ENCODE measurements at regions of chr22 and their contacts with region 1.

Region 1: DNA sequence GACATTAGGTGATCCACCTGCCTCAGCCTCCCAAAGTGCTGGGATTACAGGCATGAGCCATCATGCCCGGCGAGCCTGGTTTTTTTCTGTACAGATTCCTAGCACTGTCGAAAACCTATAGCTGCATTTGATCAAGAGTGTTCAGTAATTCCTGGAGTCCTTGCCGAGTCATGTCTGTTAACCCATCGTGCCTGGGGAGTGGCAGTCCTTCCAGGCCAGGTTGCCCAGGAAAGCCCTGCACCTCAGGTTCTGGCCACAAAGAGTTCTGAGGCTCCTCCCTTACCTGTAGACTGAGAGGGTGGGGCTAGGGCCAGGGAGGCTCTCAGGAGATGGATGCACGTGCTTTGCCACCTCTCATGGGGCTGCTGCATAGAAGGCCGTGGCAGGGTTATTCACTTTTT is 17.0 kb downstream of the YDJC start:
- DNase-seq: no peak
- ATAC-seq: no peak
- H3K4me3 Mint-ChIP-seq: no peak overlapping the region
- H3K27ac Mint-ChIP-seq: peak overlapping the region; percentile 35
- H3K4me1 Mint-ChIP-seq: peaks cover 42% of the 10 kb centered on the region
- H3K27me3 Mint-ChIP-seq: no peaks in the 10 kb centered on the region
- CTCF ChIP-seq: no peak

Region 2: DNA sequence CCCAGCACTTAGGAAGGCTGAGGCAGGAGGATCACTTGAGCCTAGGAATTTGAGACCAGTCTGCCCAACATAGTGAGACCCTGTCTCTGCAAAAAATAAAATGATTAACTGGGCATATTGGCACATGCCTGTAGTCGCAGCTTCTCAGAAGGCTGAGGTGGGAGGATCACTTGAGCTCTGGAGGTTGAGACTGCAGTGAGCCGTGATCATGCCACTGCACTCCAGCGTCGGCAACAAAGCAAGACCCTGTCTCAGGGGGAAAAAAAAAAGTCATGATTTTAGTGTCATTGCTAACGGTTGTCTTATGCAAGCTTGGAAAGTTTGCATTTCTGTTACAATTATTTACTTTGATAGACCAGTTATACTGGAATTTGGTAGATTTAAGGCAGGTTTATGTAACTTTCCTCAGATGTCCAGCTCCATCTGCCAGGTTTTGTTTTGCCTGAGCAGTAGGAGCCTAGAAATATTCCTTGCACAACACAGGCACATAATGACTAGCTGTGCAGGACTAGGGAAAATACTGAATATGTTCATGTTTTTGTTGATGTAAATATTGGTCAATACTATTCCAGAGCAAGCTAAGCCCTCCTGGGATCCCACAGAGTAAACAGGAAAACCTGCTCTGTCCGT is 33.2 kb before region 1 on chr22:
- CTCF ChIA-PET with region 1: no interaction called
- POLR2A ChIA-PET with region 1: interaction called, 18 read pairs
- intact Hi-C with region 1: no loop called
- DNase-seq: no peak
- ATAC-seq: no peak
- H3K4me3 Mint-ChIP-seq: no peak overlapping the region
- H3K27ac Mint-ChIP-seq: no peak overlapping the region
- H3K4me1 Mint-ChIP-seq: peaks cover 50% of the 10 kb centered on the region
- H3K27me3 Mint-ChIP-seq: no peaks in the 10 kb centered on the region
- CTCF ChIP-seq: no peak

Region 3: DNA sequence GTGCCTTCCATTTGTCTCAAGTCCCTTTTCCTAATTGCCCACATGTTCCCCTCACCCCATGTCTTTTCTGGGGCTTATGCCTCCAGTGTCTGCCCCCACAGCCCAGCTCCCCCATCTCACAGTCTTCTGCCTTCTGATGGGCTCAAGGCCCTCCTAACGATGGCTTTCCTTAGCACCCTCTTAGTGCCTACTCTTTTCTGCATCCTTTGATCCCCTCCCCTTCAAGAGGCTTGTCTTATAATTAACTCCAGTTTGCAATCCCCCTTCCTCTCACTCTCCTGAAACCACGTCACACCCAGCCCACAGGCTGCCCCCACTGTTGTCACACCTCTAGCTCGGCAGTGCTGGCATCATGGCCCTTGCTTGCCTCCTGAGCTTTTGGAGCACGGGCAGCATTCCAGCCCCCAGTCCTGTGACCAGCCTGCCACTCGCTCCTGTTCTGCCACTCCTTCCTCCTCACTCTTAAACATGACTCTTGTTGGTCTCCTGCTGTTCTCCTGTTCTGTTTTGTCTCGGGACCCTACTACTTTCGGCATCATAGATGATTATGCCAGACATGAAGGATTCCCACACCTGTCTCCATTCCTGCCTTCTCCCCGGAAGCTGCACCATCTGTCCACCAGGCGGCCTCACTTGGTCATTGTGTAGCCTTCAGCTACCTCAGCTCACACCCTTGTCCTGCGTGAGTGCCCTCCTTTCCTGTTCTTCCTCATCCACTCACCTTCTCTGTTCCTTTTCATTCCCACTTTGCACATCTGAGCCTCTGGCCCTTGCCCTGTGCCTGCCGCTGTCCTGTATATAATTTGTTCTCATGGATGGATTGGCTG is 19.2 kb before region 1 on chr22:
- CTCF ChIA-PET with region 1: no interaction called
- POLR2A ChIA-PET with region 1: no interaction called
- intact Hi-C with region 1: no loop called
- DNase-seq: no peak
- ATAC-seq: no peak
- H3K4me3 Mint-ChIP-seq: no peak overlapping the region
- H3K27ac Mint-ChIP-seq: no peak overlapping the region
- H3K4me1 Mint-ChIP-seq: peaks cover 50% of the 10 kb centered on the region
- H3K27me3 Mint-ChIP-seq: no peaks in the 10 kb centered on the region
- CTCF ChIP-seq: no peak

Region 4: GRCh38 chr22:21652010-21652546 is 39.2 kb after region 1 on chr22:
- CTCF ChIA-PET with region 1: no interaction called
- POLR2A ChIA-PET with region 1: no interaction called
- intact Hi-C with region 1: no loop called
- DNase-seq: peak; percentile 77
- ATAC-seq: peak; percentile 98
- H3K4me3 Mint-ChIP-seq: peak overlapping the region; percentile 90
- H3K27ac Mint-ChIP-seq: no peak overlapping the region
- H3K4me1 Mint-ChIP-seq: peaks cover 21% of the 10 kb centered on the region
- H3K27me3 Mint-ChIP-seq: no peaks in the 10 kb centered on the region
- CTCF ChIP-seq: no peak

Region 5: DNA sequence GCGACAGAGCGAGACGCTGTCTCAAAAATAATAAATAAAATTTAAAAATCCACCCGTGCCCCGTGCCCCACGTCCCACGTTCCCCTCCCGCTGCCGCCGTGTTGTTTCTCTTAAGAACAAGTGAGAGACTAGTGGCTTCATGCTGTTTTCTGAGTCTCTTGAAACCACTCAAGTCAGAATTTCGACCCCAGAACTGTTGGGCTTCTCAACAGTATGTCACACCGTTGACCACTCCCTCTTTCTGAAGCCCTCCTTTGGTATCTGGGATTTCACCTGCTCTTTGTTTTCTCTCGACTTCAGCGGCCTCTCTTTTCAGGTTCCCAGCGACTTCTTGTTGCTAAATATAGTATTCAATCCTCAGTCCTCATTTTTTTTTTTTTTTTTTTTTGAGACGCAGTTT is 53.9 kb after region 1 on chr22:
- CTCF ChIA-PET with region 1: no interaction called
- POLR2A ChIA-PET with region 1: no interaction called
- intact Hi-C with region 1: no loop called
- DNase-seq: no peak
- ATAC-seq: no peak
- H3K4me3 Mint-ChIP-seq: peak overlapping the region; percentile 99
- H3K27ac Mint-ChIP-seq: peak overlapping the region; percentile 50
- H3K4me1 Mint-ChIP-seq: peaks cover 25% of the 10 kb centered on the region
- H3K27me3 Mint-ChIP-seq: no peaks in the 10 kb centered on the region
- CTCF ChIP-seq: no peak

Region 6: DNA sequence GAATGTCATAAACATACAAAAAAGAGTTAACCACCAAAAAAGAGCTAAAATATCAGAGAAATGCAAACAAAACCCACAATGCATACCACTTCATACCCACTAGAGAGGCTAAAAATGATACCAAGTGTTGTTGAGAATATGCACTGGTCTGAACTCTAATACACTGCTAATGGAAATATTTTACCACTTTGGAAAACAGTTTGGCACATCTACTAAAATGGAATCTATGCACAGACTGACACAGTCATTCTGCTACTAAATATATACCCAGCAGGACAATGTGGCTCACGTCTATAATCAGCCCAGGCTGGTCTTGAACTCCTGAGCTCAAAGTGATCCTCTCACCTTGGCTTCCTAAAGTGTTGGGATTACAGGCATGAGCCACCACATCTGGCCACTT is 236.6 kb after region 1 on chr22:
- CTCF ChIA-PET with region 1: no interaction called
- POLR2A ChIA-PET with region 1: no interaction called
- intact Hi-C with region 1: no loop called
- DNase-seq: no peak
- ATAC-seq: no peak
- H3K4me3 Mint-ChIP-seq: no peak overlapping the region
- H3K27ac Mint-ChIP-seq: no peak overlapping the region
- H3K4me1 Mint-ChIP-seq: peaks cover 72% of the 10 kb centered on the region
- H3K27me3 Mint-ChIP-seq: no peaks in the 10 kb centered on the region
- CTCF ChIP-seq: no peak

Measured in activated B cell treated with CpG ODN at 0.5 μM for 24 hours (primary cell).